CD8-positive, alpha-beta T cell (primary cell): ENCODE measurements at regions of chr1 and their contacts with region 1.

Region 1: DNA sequence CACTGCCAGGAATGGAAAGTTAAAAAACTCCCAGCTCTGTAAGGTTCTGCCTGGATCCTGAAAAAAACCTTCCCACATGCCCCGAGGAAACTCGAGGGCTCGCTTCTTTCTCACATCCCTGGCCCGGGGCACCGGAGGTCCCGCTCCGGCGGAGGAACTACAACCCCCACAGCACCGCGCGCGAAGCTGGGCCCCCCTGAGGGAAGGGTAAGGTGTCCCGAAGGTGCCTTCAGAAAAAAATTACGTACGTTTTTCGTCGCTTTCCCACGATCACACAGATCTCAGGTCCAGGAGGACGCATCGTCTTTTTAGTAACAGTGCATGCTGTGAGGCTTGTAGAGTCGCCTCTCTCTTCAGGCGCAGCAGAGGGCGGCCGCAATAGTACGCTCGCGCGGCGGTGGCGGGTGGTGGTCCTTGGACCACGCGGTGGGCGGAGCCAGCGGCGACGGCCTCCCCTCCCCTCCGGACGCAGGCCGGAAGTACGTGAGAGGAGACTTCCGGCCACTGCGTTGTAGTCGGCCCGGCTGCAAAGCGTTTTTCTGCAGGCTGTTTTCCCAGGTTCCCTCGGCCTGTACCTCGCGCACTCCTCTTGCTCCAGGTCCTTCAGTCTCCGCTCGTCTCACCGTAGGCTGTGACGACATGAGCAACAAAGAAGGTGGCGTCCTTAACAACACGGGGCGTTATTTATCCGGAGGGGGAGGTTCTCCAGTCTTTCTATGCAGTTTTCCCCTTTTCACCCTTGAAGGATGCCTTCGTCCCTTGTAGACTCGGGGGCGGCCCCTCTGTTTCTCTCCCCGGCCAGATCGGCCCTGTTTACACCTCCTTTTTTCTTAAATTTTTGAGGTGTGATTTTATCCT is at the start of gene TSNAX:
- DNase-seq: peak; percentile 83 to 97 (median 89)
- ATAC-seq: peak; percentile 91
- H3K4me3 ChIP-seq: peak within 1 kb of the TSS; percentile 81 to 94
- H3K4me3 Mint-ChIP-seq: peak within 1 kb of the TSS; percentile 97
- H3K27ac ChIP-seq: peak within 1 kb of the TSS; percentile 93 to 98
- H3K27ac Mint-ChIP-seq: peak within 1 kb of the TSS; percentile 100
- H3K4me1 ChIP-seq: peaks cover 44% of the 10 kb centered on the region
- H3K4me1 Mint-ChIP-seq: peaks cover 46% of the 10 kb centered on the region
- H3K27me3 ChIP-seq: no peaks in the 10 kb centered on the region
- H3K27me3 Mint-ChIP-seq: no peaks in the 10 kb centered on the region
- CTCF ChIP-seq: no peak
- total RNA-seq, gene TSNAX: 19.7 to 21.7 TPM

Region 2: GRCh38 chr1:230867903-230868735 is 660.3 kb before region 1 on chr1 and contains the start of gene C1orf198:
- CTCF ChIA-PET with region 1: no interaction called
- POLR2A ChIA-PET with region 1: no interaction called
- intact Hi-C with region 1: loop called in 1 of 2 experiments (anchors 5 kb)
- DNase-seq: peak; percentile 53 to 88 (median 72)
- ATAC-seq: peak; percentile 93
- H3K4me3 ChIP-seq: peak within 1 kb of the TSS; percentile 65 to 79
- H3K4me3 Mint-ChIP-seq: peak within 1 kb of the TSS; percentile 89
- H3K27ac ChIP-seq: peak within 1 kb of the TSS in 1 of 2 experiments; percentile 57
- H3K27ac Mint-ChIP-seq: peak within 1 kb of the TSS; percentile 49
- H3K4me1 ChIP-seq: peaks cover 14% of the 10 kb centered on the region
- H3K4me1 Mint-ChIP-seq: peaks cover 21% of the 10 kb centered on the region
- H3K27me3 ChIP-seq: no peaks in the 10 kb centered on the region
- H3K27me3 Mint-ChIP-seq: peaks cover 18% of the 10 kb centered on the region
- CTCF ChIP-seq: no peak
- total RNA-seq, gene C1orf198: 3.2 to 3.8 TPM

Region 3: DNA sequence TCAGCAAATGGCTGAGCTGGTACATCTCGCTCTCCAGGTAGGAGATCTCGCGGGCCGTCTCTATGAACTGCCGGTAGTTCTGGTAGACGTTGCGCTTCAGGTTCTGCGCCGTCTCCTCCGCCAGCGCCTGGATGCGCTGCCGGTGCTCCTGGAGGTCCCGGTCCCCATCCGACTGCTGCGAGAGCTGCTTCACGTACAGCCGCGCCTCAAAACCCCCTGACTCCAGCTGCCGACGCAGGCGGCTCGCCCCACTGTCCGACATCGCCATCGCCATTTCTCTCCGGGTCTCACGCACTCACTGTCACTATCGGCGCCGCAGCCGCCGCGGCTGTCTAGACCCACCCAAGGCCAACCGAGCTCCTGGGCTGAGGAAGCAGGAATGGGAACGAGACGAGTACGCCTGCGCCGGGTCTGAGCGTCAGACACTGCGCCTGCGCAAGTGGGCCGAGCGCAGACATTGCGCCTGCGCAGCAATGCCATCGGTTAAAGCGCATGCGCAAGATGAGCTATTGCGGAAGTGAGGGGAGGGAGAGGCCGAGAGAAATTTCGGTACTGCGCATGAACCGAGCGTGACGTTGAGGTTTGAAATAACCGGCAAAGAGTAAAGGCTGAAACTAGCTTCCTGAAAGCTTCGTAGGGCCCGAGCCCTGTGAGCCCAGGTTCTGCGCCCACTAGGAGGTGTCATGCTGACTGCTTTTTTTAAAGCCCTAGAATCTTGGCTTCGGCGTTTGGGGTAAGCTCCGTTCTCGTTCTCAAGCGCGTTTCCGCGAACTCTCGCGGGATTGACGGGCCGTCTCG is 190.7 kb before region 1 on chr1 and contains the start of gene EXOC8:
- CTCF ChIA-PET with region 1: no interaction called
- POLR2A ChIA-PET with region 1: interaction called, 11 read pairs
- intact Hi-C with region 1: loop called (anchors 1 kb)
- DNase-seq: peak; percentile 95 to 99 (median 98)
- ATAC-seq: peak; percentile 83
- H3K4me3 ChIP-seq: peak within 1 kb of the TSS; percentile 95 to 98
- H3K4me3 Mint-ChIP-seq: peak within 1 kb of the TSS; percentile 97
- H3K27ac ChIP-seq: peak within 1 kb of the TSS; percentile 97 to 98
- H3K27ac Mint-ChIP-seq: peak within 1 kb of the TSS; percentile 99
- H3K4me1 ChIP-seq: peaks cover 55% of the 10 kb centered on the region
- H3K4me1 Mint-ChIP-seq: peaks cover 64% of the 10 kb centered on the region
- H3K27me3 ChIP-seq: no peaks in the 10 kb centered on the region
- H3K27me3 Mint-ChIP-seq: no peaks in the 10 kb centered on the region
- CTCF ChIP-seq: no peak
- total RNA-seq, gene EXOC8: 28.8 to 28.9 TPM

Region 4: GRCh38 chr1:231407547-231408396 is 120.6 kb before region 1 on chr1:
- CTCF ChIA-PET with region 1: no interaction called
- POLR2A ChIA-PET with region 1: no interaction called
- intact Hi-C with region 1: no loop called
- DNase-seq: no peak
- ATAC-seq: no peak
- H3K4me3 ChIP-seq: no peak overlapping the region
- H3K4me3 Mint-ChIP-seq: no peak overlapping the region
- H3K27ac ChIP-seq: no peak overlapping the region
- H3K27ac Mint-ChIP-seq: no peak overlapping the region
- H3K4me1 ChIP-seq: peaks cover 26% of the 10 kb centered on the region
- H3K4me1 Mint-ChIP-seq: peaks cover 28% of the 10 kb centered on the region
- H3K27me3 ChIP-seq: no peaks in the 10 kb centered on the region
- H3K27me3 Mint-ChIP-seq: no peaks in the 10 kb centered on the region
- CTCF ChIP-seq: no peak

Region 5: DNA sequence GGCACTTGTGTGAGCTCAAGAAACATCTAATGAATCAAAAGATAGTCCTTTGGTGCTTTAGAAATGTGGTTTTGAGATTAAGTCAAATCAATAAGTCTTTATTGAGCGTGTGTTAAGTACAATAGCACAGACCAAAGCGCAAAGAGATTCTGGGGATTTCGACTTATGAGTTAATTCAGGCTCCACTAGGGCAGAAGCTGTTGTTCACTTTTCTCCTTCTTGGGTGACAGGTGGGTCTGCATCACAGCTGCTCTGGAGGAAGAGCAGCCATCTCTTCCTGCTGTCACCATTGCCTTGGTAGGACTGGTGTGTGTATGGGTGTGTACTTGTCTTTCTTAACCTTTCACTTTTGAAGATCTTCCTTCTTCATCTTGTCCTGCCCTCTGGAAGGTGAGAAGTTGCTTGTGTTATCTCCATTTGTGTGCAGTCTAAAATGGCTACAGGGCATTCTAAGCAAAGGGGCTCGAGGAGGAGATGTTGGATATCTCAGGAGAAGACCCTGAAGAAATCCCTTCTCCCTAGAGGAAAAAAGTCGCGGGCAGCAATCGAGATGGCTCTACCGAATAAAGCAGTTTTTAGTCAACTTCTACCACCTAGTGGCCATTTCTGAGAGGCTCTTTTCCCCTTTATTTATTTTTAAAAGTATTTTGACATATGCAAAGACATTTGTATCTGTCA is 75.3 kb after region 1 on chr1:
- CTCF ChIA-PET with region 1: interaction called, 3 read pairs
- POLR2A ChIA-PET with region 1: no interaction called
- intact Hi-C with region 1: loop called in 1 of 2 experiments (anchors 5 kb)
- DNase-seq: peak in 7 of 9 experiments; percentile 6 to 73 (median 36)
- ATAC-seq: peak; percentile 89
- H3K4me3 ChIP-seq: peak overlapping the region; percentile 62 to 74
- H3K4me3 Mint-ChIP-seq: peak overlapping the region; percentile 95
- H3K27ac ChIP-seq: peak overlapping the region; percentile 21 to 40
- H3K27ac Mint-ChIP-seq: peak overlapping the region; percentile 89
- H3K4me1 ChIP-seq: peaks cover 4% of the 10 kb centered on the region
- H3K4me1 Mint-ChIP-seq: peaks cover 8% of the 10 kb centered on the region
- H3K27me3 ChIP-seq: no peaks in the 10 kb centered on the region
- H3K27me3 Mint-ChIP-seq: no peaks in the 10 kb centered on the region
- CTCF ChIP-seq: peak; percentile 74

Region 6: GRCh38 chr1:231626535-231626945 is 98.1 kb after region 1 on chr1 and contains the start of gene DISC1:
- CTCF ChIA-PET with region 1: no interaction called
- POLR2A ChIA-PET with region 1: no interaction called
- intact Hi-C with region 1: loop called in 1 of 2 experiments (anchors 1 kb)
- DNase-seq: peak; percentile 31 to 80 (median 63)
- ATAC-seq: peak; percentile 75
- H3K4me3 ChIP-seq: peak within 1 kb of the TSS; percentile 89 to 92
- H3K4me3 Mint-ChIP-seq: peak within 1 kb of the TSS; percentile 96
- H3K27ac ChIP-seq: peak within 1 kb of the TSS; percentile 32 to 50
- H3K27ac Mint-ChIP-seq: peak within 1 kb of the TSS; percentile 90
- H3K4me1 ChIP-seq: peaks cover 26% of the 10 kb centered on the region
- H3K4me1 Mint-ChIP-seq: peaks cover 42% of the 10 kb centered on the region
- H3K27me3 ChIP-seq: peaks cover 0 to 7% of the 10 kb centered on the region in 2 experiments
- H3K27me3 Mint-ChIP-seq: no peaks in the 10 kb centered on the region
- CTCF ChIP-seq: no peak
- total RNA-seq, gene DISC1: 9.6 to 10.1 TPM